HAP-1 (cell line): ENCODE measurements at regions of chr22 and their contacts with region 1.

Region 1: DNA sequence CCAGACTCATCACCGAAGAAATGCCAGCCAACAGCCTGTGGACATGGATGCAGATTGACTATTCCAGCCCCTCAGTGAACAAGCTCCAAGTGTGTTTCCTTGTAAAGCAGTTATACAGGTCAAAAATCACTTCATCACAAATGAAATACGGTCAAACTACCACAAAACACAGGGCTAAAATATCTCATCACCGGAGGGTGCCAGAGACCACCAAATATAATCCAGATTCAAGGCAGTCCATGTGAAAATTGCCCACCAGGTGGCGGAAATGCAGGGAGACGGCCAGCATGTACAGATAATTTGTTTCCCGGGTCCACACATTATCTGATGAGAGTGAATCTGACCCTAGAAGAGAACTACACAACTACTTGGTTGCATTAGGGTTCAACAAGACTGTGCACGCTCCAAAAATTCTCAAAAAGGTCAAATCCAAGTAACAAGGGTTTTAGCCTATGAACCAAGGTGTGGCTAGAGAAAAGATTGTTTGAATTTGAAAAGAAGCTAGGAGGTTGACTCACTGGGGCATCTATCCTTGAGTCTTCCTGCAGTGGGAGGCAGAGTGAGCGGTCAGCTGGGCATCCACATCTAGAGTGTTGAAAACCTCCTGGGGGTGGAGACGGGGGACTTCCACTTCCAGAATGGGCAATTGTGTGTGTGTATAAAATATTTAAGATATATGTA is 71.7 kb downstream of the IGLL5 start:
- DNase-seq: peak; percentile 68 to 89
- H3K4me3 ChIP-seq: no peak overlapping the region
- H3K4me1 ChIP-seq: no peaks in the 10 kb centered on the region
- H3K27me3 ChIP-seq: peaks cover 12% of the 10 kb centered on the region

Region 2: GRCh38 chr22:22463855-22464540 is 495.3 kb before region 1 on chr22:
- in situ Hi-C with region 1: loop called (anchors 10 kb)
- DNase-seq: peak; percentile 52 to 80
- H3K4me3 ChIP-seq: no peak overlapping the region
- H3K4me1 ChIP-seq: no peaks in the 10 kb centered on the region
- H3K27me3 ChIP-seq: peaks cover 2% of the 10 kb centered on the region; the same call in 1 of the 2 replicates

Region 3: DNA sequence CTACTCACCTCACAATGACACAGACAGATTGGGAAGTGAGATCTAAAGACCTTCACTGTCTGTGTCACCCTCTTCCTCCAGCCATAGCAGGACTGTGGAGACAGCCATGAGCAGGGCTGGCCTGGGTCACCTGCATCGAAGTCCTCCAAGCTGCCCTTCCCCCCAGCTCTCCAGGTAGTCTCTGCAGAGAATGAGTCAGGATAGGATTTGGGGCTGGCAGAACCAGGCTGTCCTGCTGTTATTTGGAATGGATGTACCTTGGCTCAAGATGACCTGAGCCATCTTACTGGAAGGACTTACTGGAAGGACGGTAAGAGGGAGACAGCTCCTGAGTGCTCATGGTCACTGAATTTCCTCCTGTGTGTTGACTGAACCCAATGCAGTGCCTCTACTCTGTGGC is 285.7 kb before region 1 on chr22:
- in situ Hi-C with region 1: no loop called
- DNase-seq: no peak
- H3K4me3 ChIP-seq: no peak overlapping the region
- H3K4me1 ChIP-seq: no peaks in the 10 kb centered on the region
- H3K27me3 ChIP-seq: peaks cover 8% of the 10 kb centered on the region

Region 4: GRCh38 chr22:22855617-22856308 is 103.5 kb before region 1 on chr22:
- in situ Hi-C with region 1: loop called (anchors 10 kb)
- DNase-seq: peak in 1 of 2 experiments; percentile 52
- H3K4me3 ChIP-seq: no peak overlapping the region
- H3K4me1 ChIP-seq: no peaks in the 10 kb centered on the region
- H3K27me3 ChIP-seq: peaks cover 23% of the 10 kb centered on the region

Region 5: DNA sequence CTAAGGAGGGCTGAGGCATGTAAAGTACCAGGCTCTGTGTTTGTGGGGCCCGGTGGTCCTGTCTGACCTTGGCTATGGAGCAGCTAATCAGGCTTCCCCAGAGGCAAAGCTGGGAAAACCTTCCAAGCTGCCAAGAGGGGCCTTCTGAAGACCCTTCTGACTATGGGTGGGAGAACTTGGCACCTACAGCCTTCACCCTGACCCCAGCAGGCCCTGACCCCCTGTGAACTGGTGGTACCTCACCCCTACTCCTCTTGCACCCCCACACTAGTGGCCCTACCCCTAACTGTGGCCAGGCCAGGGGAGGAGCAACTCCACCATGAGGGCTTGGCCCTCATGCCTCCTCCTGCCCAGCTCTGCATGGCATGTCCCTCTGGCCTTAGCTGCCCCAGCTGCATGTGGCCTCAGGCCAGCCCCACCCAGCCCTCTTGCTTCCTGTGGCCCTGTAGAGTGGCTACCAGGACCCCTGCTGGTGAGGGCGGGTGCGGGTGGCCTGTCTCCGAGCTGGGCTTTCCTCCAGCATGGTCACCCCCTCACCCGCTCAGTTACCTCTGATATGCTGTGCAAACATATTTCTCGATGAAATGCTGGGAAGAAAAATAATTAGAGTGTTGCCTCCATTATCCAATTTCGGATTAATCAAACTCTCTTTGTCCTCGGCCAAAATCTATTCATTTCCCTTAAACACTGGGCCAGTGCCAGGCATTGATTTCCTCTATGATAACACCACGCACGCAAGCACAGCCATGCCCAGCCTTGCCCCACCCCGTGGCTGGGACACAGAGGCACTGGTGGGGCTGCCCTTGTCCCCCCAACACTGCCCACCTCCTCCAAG is 118.6 kb after region 1 on chr22:
- in situ Hi-C with region 1: no loop called
- DNase-seq: no peak
- H3K4me3 ChIP-seq: no peak overlapping the region
- H3K4me1 ChIP-seq: peaks cover 10% of the 10 kb centered on the region
- H3K27me3 ChIP-seq: no peaks in the 10 kb centered on the region

Region 6: GRCh38 chr22:23128269-23129108 is 169.2 kb after region 1 on chr22:
- in situ Hi-C with region 1: loop called (anchors 5 kb)
- DNase-seq: peak; percentile 39 to 87
- H3K4me3 ChIP-seq: no peak overlapping the region
- H3K4me1 ChIP-seq: no peaks in the 10 kb centered on the region
- H3K27me3 ChIP-seq: no peaks in the 10 kb centered on the region

Region 7: DNA sequence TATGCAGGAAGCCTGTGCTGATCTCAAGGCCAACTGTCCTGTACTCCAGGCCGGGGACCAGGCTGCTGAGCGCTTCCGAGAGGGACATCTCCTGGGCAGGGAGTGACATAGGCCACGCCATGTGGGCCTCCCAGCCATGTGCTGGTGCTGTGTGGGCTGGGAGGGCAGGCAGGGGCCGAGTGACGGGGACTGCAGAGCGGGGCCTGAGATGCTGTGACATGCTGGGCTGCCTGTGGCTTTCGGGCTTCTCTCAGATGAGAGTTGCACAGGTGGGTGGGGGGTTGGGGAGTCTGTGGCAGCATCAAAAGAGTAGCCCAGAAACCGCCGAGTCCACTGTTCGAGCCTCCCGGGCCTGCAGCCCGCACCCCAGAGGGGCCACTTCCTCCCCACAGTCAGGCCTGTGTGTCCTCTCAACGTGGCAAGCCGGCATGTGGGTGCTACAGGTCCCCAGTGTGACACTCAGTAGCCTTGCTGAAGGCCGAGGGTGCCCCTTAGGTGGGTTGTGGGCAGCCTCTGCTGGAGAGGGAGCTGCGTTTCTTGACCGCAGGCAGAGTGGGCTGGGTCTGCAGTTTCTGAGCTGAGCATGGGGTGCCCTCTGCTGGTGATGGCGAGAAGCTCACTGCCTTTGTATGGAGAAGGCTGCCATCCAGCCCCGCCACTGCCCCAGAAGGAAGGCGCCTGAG is 322.3 kb after region 1 on chr22:
- in situ Hi-C with region 1: loop called (anchors 5 kb)
- DNase-seq: peak; percentile 43 to 90
- H3K4me3 ChIP-seq: no peak overlapping the region
- H3K4me1 ChIP-seq: no peaks in the 10 kb centered on the region
- H3K27me3 ChIP-seq: no peaks in the 10 kb centered on the region